GM10248 (cell line): ENCODE measurements at regions of chrX and their contacts with region 1.

Region 1: DNA sequence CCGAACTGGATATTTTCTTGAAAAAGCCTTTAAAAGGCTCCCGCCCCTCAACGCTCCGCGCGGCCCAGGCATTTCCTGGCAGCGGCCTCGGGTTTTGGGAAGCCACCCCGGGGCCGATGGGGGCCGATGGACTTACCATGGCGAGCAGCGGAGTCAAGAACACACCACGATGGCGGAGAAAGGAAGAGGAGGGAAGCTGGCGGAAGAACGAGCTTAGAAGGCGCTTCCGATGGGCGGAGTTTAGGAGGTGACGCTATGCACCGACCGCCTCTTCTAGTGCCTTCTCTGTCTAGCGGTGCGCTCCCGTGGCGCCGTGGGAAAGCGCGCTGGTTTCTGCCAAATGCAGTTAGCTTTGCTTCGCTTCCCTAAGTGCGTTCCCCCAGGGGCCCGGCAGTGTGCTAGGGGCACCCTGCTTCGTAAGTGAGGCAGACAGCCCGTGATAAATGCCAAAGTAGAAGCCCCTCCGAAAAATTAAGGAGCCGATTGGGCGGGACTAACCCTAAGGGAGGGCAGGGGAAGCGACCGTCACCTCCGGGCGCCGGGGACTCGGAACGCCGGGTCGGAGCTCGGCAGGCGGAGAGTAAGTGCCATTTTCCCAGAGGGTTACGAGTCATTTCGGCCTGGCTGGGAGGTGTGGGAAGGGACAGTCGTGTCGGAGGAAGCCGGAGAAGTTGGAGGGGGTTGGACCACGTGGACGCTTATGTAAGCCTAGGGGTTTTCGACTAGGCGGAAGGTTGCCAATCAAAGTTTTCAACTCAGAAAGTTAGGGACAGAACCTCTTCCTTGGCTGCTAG is at the start of gene RPL39:
- DNase-seq: peak; percentile 80
- CTCF ChIP-seq: no peak

Region 2: DNA sequence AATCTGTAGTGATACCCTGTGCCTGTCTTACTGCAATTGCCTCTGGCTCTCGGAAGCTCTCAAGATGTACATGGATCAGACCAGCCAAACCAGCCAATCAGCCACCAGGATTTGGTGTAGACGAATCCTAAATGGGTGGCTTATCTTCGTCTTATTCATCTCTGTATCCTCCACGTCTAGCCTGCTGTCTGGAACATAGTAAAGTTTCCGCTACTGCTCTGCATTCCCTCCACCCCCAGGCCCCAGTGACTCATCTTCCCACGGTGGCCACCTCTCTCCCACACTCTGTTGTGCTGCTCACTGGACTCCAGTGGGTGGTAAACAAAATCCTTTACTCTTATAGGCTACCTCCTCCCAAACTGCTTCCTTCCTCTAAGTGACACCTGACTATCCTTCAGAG is 136.5 kb before region 1 on chrX:
- CTCF ChIA-PET with region 1: no interaction called
- POLR2A ChIA-PET with region 1: no interaction called
- DNase-seq: peak; percentile 31
- CTCF ChIP-seq: no peak

Region 3: DNA sequence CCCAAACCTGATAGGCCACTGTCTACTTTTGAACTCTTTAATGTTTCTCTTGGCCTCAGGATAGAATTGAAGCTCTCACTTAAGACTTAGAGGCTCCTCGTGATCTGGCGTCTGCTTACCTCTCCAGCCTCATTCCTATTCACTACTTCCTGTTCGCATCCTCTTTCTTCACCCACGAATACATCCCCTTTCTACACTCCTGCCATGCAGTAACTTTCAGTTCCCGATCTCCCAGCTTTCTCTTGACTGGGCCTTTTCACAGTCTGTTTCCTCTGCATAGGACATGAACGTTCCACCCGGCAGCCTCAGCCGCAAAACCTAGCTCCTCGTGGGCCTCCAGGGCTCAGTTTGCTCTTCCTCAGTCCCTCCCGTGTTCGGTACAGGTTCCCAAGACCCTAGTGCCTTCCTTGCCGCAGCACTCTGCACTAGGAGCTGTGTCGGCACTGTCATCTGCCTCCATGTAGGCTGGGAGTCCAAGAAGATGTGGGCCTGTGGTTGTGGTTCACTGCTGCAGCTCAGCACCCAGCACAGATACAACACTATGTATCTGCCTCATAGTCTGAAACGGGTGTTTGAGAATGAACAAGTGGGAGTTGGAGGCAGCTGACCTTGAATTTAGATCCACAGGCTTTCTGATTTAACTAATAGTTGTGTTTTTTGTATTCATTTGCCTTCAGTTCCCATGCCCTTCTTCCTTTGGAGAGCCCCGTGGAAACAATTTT is 16.0 kb before region 1 on chrX:
- CTCF ChIA-PET with region 1: interaction called, 11 read pairs
- POLR2A ChIA-PET with region 1: interaction called, 16 read pairs
- DNase-seq: no peak
- CTCF ChIP-seq: no peak

Region 4: GRCh38 chrX:119852382-119853353 is 61.0 kb after region 1 on chrX and contains the start of gene UPF3B:
- CTCF ChIA-PET with region 1: no interaction called
- POLR2A ChIA-PET with region 1: interaction called, 16 read pairs
- DNase-seq: peak; percentile 93
- CTCF ChIP-seq: no peak

Region 5: DNA sequence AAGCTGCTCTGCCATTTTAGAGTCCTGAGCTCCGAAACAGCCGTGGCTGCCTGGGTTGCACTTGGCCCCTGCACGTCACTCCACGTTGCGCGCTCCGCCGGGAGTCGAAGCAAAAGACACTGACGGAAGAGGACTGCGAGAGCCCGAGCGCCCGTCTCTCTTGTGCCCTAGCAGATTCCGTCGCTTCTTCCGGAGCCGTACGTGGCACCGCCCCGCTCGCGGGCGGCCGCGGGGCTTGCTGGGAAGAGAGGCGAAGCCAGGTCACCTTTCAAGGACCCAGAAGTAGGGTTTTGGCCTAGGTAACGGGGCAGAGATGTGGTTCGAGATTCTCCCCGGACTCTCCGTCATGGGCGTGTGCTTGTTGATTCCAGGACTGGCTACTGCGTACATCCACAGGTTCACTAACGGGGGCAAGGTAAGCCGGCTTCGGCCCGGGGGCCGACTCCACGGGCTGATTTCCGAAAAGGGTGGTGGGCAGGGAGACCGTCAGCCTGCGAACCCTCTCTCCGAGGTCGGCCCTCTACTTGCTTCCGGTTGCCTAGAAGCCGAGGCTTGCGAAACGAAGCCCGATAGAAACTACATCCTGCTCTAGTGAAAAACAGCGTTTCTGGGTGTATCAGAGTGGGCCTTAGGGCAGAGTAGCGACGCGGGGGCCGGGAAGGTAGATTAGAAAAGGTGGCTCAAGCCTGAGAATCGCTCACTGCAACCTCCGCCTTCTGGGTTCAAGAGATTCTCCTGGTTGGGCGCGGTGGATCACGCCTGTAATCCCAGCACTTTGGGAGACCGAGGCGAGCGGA is 80.2 kb after region 1 on chrX and contains the starts of genes NDUFA1 and RNF113A:
- CTCF ChIA-PET with region 1: no interaction called
- POLR2A ChIA-PET with region 1: interaction called, 17 read pairs
- DNase-seq: peak; percentile 84
- CTCF ChIP-seq: no peak

Region 6: GRCh38 chrX:120736989-120737388 is 945.4 kb after region 1 on chrX:
- CTCF ChIA-PET with region 1: no interaction called
- POLR2A ChIA-PET with region 1: no interaction called
- DNase-seq: no peak
- CTCF ChIP-seq: no peak